Tibial artery (tissue), 4 donors: ENCODE measurements at regions of chr5 and their contacts with region 1.

Region 1: DNA sequence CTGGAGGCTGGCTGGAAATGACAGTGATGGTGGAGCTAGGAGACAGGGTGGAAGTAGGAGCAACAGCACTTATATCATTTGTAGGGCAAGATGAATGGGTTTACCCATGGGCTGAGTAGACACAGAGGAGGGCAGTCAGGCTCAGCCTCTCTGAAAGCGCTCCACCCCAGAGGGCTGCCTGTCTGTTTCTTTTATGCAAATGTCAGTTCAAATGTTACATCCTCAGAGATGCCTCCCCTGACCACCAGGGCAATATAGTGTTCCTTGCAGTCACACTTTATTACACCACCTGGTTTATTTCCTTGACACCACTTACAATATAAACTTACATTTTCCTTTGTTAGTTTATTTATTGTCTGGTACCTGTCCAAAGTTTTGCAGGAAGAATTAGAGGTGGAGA is 159.5 kb upstream of the IL12B start:
- DNase-seq: no peak
- H3K4me3 ChIP-seq: no peak overlapping the region
- H3K27ac ChIP-seq: no peak overlapping the region
- H3K4me1 ChIP-seq: no peaks in the 10 kb centered on the region
- H3K27me3 ChIP-seq: no peaks in the 10 kb centered on the region
- CTCF ChIP-seq: no peak

Region 2: GRCh38 chr5:159548517-159548916 is 58.7 kb after region 1 on chr5:
- intact Hi-C with region 1: loop called (anchors 5 kb)
- DNase-seq: no peak
- H3K4me3 ChIP-seq: no peak overlapping the region
- H3K27ac ChIP-seq: no peak overlapping the region
- H3K4me1 ChIP-seq: peaks cover 0 to 20% (median 12%) of the 10 kb centered on the region in 4 donors
- H3K27me3 ChIP-seq: no peaks in the 10 kb centered on the region
- CTCF ChIP-seq: peak in 1 of 2 experiments; percentile 19